ENCODE measurements at regions of chr5 and their contacts with region 1.

Region 1: DNA sequence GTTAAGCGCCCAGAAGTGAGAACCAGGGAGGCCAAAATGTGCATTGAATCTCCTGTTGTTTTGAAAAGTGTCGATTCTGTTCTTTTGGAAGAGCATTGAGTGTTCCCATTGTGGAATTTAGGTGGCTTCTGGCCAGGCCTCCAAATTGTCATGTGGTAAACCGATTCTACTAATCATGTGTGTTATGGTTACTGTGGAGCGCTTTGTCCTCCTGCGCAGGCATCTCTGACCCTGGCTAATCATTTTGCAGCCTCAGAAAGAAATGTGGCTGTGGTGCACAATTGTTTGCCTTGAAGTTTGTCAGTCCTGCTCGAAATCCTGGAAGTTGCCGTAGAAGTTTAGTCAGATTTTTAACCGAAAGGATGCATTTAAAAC is 121.3 kb downstream of the RASGRF2 start:
- DNase-seq: peak in 5 of 10 donors; percentile 32 to 77 (median 55)
- H3K4me3 ChIP-seq: peak overlapping the region in 42 of 59 donors; percentile 3 to 53 (median 26)
- H3K27ac ChIP-seq: peak overlapping the region; percentile 76 to 99 (median 94)
- H3K27me3 ChIP-seq: no peaks in the 10 kb centered on the region
- CTCF ChIP-seq: no peak

Region 2: DNA sequence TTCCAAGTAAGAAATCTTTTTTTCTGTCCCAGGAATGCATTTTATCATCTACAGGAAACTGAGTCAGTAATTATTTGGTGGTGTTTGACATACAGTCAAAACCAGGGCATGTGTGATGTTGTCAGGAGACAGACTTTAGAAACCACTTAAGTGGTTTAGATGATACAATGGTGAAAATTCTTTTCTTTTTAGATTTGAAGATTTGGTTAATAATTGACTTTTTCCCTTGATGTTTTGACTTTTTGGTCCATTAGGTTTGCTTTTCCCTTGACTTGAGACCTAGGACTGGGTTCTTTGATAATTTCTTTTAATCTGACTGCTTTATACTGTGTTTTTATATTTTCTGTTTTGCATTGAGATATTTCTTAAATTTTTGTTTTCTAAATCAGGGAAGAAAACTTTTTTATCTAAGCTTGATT is 36.0 kb before region 1 on chr5:
- intact Hi-C with region 1: loop called in 1 of 2 experiments (anchors 5 kb)
- DNase-seq: no peak
- H3K4me3 ChIP-seq: no peak overlapping the region
- H3K27ac ChIP-seq: peak overlapping the region in 57 of 59 donors; percentile 0 to 99 (median 86)
- H3K27me3 ChIP-seq: no peaks in the 10 kb centered on the region
- CTCF ChIP-seq: no peak

Measured in dorsolateral prefrontal cortex (tissue), 120 donors.